ENCODE measurements at regions of chr10 and their contacts with region 1.

Region 1: GRCh38 chr10:6778992-6779701 is 199.1 kb upstream of the PRKCQ start:
- DNase-seq: peak; percentile 85 to 94
- H3K4me3 ChIP-seq: no peak overlapping the region; the same call in 1 of the 2 replicates
- H3K27ac ChIP-seq: peak overlapping the region; percentile 72
- H3K4me1 ChIP-seq: peaks cover 10% of the 10 kb centered on the region
- H3K27me3 ChIP-seq: no peaks in the 10 kb centered on the region
- CTCF ChIP-seq: no peak

Region 2: DNA sequence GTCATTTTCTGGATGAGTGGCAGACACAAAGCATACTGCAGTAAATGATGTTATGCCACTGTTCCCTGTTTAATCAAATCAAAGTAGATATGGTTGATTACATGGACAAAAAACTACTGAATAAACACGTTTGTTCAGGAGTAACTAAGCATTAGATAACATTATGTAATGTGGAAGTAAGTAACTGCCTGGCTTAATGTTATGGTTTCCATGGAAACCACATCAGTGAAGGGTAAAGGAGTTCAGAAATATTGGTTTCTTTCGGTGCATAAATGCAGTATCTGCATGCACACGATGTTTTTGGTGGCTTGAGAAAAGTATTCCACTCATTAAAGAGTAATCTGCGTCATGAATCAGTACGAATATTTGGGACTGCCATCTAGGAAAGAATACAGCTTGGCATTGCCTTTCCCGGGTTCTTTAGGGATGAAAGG is 67.7 kb before region 1 on chr10:
- CTCF ChIA-PET with region 1: no interaction called
- POLR2A ChIA-PET with region 1: no interaction called
- intact Hi-C with region 1: no loop called
- DNase-seq: no peak
- H3K4me3 ChIP-seq: no peak overlapping the region
- H3K27ac ChIP-seq: no peak overlapping the region
- H3K4me1 ChIP-seq: no peaks in the 10 kb centered on the region
- H3K27me3 ChIP-seq: no peaks in the 10 kb centered on the region
- CTCF ChIP-seq: no peak

Region 3: DNA sequence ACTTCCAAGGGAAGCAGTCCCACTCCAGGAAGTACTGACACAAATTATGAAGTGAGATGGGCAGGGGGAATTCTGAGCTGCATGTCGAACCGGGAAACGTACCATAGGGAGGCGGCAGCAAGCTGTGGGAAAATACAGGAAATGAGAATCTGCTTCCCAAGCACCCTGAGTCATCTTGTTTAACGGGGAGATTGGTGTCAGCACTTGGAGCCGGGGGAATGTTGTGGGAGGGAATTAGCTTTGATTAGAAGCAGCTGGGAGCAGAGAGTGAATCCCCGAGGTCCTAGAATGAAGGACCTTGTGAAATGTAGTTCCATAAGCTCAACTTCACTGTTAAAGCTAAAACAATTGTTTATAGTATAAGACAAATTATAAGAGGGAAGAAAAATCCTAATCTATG is 57.7 kb before region 1 on chr10:
- CTCF ChIA-PET with region 1: interaction called, 3 read pairs
- POLR2A ChIA-PET with region 1: no interaction called
- intact Hi-C with region 1: loop called (anchors 1 kb)
- DNase-seq: peak; percentile 50 to 66
- H3K4me3 ChIP-seq: no peak overlapping the region; the same call in 1 of the 2 replicates
- H3K27ac ChIP-seq: peak overlapping the region; percentile 97
- H3K4me1 ChIP-seq: peaks cover 21% of the 10 kb centered on the region
- H3K27me3 ChIP-seq: no peaks in the 10 kb centered on the region
- CTCF ChIP-seq: peak; percentile 30; the same call in 1 of the 2 replicates

Region 4: DNA sequence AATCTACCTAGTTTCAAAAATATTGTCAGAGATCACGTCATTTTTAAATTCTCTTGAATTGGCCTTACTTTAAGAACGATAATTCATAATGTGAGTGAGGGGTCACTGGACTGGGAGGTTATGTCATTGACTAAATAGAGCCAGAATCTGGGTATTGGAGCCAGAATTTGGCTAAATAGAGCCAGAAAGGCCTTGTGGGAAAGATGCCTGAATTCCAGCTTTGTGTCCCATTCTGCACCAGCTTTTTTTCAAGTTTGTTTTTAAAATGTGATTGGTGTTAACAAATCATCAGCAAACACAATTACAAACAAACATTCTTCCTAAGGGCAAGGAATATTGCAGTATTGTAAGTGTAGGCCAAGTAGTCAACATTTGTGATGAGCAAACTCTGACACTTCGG is 34.2 kb after region 1 on chr10:
- CTCF ChIA-PET with region 1: no interaction called
- POLR2A ChIA-PET with region 1: interaction called, 24 read pairs
- intact Hi-C with region 1: no loop called
- DNase-seq: no peak
- H3K4me3 ChIP-seq: no peak overlapping the region
- H3K27ac ChIP-seq: no peak overlapping the region
- H3K4me1 ChIP-seq: no peaks in the 10 kb centered on the region
- H3K27me3 ChIP-seq: no peaks in the 10 kb centered on the region
- CTCF ChIP-seq: no peak

Region 5: DNA sequence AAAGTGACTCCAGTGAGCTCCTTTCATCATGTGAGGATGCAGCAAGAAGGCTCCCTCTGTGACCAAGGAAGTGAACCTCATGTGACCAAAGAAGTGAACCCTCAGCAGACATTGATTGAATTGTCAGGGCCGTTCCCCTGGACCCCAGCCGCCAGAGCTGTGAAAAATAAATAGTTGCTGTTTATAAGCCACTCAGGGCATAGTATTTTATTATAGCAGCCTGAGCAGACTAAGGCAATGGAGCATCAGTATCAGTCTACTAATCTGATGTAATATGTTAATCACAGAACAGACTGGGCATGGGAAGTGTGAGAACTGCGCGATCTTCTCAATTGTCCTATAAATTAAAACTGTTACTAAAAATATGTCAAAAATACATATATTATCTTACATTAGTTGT is 185.4 kb after region 1 on chr10:
- CTCF ChIA-PET with region 1: no interaction called
- POLR2A ChIA-PET with region 1: no interaction called
- intact Hi-C with region 1: no loop called
- DNase-seq: no peak
- H3K4me3 ChIP-seq: no peak overlapping the region
- H3K27ac ChIP-seq: no peak overlapping the region
- H3K4me1 ChIP-seq: no peaks in the 10 kb centered on the region
- H3K27me3 ChIP-seq: 0 out of 2 replicates have a peak, but pooled peaks cover 2% of the 10 kb centered on the region
- CTCF ChIP-seq: no peak

Measured in PC-9 (cell line).